Activated CD4-positive, alpha-beta T cell treated with anti-CD3 and anti-CD28 coated beads for 36 hours (primary cell): ENCODE measurements at regions of chr6 and their contacts with region 1.

Region 1: DNA sequence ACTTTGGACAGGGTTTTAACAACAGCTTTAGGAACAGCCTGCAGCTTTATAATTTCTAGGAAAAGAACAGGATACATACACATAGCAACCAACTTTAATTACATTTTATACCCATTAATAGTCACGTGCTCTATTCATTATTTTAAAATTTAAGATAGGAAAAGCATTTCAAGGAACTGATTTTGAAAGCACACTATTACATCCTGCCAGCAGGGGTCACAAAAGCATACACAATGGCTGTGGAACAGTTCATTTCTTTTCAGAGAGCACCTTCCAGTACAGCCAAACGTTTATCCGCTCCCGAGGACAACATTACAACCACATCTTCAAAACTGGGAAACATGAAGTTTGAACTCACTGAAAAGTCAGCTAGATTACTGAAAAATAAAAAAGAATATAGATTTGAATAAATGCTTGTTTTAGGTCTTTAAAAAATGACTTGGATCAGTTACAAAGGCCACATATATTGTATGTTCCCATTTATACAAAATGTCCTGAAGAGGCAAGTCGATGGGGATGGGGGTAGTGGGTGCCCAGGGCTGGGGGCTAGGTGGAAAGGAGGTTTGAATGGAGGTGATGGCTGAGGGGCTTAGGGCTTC is 104.6 kb upstream of the EXOC2 start:
- DNase-seq: peak; percentile 68
- ATAC-seq: no peak
- H3K4me3 Mint-ChIP-seq: no peak overlapping the region
- H3K27ac Mint-ChIP-seq: no peak overlapping the region
- H3K4me1 Mint-ChIP-seq: no peaks in the 10 kb centered on the region
- H3K27me3 Mint-ChIP-seq: peaks cover 46% of the 10 kb centered on the region

Region 2: GRCh38 chr6:811831-812230 is 14.3 kb after region 1 on chr6:
- CTCF ChIA-PET with region 1: interaction called, 11 read pairs
- POLR2A ChIA-PET with region 1: no interaction called
- intact Hi-C with region 1: no loop called
- DNase-seq: no peak
- ATAC-seq: no peak
- H3K4me3 Mint-ChIP-seq: no peak overlapping the region
- H3K27ac Mint-ChIP-seq: no peak overlapping the region
- H3K4me1 Mint-ChIP-seq: peaks cover 9% of the 10 kb centered on the region
- H3K27me3 Mint-ChIP-seq: peaks cover 9% of the 10 kb centered on the region

Region 3: GRCh38 chr6:1311400-1312202 is 514.0 kb after region 1 on chr6 and contains the start of gene FOXQ1:
- CTCF ChIA-PET with region 1: no interaction called
- POLR2A ChIA-PET with region 1: no interaction called
- intact Hi-C with region 1: loop called in 1 of 2 experiments (anchors 5 kb)
- DNase-seq: peak; percentile 41
- ATAC-seq: peak; percentile 12
- H3K4me3 Mint-ChIP-seq: peak within 1 kb of the TSS; percentile 53
- H3K27ac Mint-ChIP-seq: no peak within 1 kb of the TSS
- H3K4me1 Mint-ChIP-seq: peaks cover 24% of the 10 kb centered on the region
- H3K27me3 Mint-ChIP-seq: peaks cover 65% of the 10 kb centered on the region
- total RNA-seq, gene FOXQ1: not detected

Region 4: DNA sequence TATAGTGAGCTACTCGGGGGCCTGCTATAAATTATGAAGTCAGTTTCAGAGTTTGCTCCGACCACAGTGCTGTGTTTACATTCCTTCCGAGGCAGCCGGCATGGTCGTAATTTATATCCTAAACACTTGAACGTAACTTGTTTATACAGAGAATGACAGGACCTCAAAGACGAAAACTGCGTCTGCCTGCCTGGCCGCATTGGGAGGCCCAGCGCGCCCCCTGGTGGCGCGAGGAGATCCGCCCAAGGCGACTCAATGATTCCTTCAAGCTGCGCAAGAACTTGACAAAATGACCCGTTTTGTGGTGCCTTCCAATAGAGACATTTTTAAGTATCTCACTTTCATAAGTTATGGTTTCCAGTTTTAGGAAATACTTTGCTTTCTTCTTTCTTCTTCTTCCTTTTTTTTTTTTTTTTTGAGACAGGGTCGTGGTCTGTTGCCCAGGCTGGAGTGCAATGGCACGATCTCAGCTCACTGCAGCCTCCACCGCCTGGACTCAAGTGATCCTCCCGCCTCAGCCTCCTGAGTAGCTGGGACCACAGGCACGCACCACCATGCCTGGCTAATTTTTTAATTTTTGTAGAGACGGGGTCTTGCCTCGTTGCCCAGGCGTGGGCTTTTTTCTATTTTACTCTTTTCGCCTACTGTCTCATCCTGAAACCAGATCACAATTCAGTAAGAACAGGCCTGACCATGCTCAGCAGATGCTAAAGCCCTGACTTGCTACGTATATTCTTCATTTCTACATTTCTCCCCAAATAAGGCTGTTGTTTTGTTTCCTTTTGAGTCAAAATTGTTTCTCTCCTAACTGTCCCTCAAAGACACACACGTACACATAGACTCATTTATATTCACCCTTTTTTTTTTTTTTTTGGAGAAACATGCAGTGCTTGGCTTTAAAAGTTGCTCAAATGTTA is 599.6 kb after region 1 on chr6:
- CTCF ChIA-PET with region 1: interaction called, 8 read pairs
- POLR2A ChIA-PET with region 1: no interaction called
- intact Hi-C with region 1: loop called (anchors 1 kb)
- DNase-seq: peak; percentile 85
- ATAC-seq: peak; percentile 75
- H3K4me3 Mint-ChIP-seq: no peak overlapping the region
- H3K27ac Mint-ChIP-seq: no peak overlapping the region
- H3K4me1 Mint-ChIP-seq: peaks cover 4% of the 10 kb centered on the region
- H3K27me3 Mint-ChIP-seq: peaks cover 51% of the 10 kb centered on the region